Activated T-helper 2 cell treated with anti-CD3 and anti-CD28 coated beads, Interferon-gamma antibody, Interleukin-2, Interleukin-4, amounts not matched to agents 10 μg/mL and 5 μg/mL and 100 μg/mL, durations not matched to agents 14 hours and 24 hours and 36 hours (primary cell): ENCODE measurements at regions of chr20 and their contacts with region 1.

Region 1: DNA sequence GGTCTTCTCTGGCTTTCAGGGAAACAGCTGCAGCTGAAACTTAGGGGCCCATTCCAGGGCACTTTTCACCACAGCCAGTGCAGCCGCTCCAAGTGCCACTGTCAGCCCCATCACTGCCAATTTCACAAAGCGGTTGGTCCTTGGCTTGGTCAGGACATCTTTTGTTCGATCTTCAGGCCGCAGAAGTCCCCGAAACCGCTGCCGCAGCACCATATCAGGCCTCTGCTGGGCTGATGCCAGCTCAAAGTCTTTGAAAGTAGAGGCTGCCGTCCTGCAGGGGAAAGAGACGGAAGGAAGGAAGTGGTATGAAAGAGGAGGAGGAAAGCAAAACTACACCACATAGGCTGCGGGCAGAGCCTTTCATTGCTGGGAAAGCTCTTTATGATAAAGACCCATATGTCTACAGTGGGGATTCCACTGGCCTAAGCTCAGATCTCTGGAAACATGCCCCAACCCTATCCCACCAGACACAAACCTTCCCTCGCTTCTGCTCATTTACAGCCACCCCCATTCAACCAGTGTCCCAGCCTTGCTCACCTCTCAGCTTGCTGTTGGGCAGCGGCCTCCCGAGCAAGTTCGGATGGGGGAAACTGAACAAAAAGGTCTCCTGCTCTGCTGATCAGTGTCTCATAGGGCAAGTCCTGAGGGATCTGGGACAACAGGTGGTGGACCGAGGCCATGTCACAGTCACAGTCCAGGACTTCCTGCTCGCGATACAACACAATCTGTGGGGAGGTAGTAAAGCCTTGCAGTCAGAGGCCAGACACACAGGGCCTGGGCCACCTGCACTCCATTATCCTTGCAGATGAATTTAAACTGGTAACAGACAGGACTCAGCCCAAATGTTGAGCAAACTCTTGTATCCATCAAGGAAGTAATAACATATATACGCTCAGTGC is 23.5 kb downstream of the TBC1D20 start:
- DNase-seq: peak; percentile 55
- H3K4me3 Mint-ChIP-seq: peak overlapping the region; percentile 71
- H3K27ac Mint-ChIP-seq: peak overlapping the region; percentile 64
- H3K4me1 Mint-ChIP-seq: peaks cover 54% of the 10 kb centered on the region
- H3K27me3 Mint-ChIP-seq: no peaks in the 10 kb centered on the region

Region 2: DNA sequence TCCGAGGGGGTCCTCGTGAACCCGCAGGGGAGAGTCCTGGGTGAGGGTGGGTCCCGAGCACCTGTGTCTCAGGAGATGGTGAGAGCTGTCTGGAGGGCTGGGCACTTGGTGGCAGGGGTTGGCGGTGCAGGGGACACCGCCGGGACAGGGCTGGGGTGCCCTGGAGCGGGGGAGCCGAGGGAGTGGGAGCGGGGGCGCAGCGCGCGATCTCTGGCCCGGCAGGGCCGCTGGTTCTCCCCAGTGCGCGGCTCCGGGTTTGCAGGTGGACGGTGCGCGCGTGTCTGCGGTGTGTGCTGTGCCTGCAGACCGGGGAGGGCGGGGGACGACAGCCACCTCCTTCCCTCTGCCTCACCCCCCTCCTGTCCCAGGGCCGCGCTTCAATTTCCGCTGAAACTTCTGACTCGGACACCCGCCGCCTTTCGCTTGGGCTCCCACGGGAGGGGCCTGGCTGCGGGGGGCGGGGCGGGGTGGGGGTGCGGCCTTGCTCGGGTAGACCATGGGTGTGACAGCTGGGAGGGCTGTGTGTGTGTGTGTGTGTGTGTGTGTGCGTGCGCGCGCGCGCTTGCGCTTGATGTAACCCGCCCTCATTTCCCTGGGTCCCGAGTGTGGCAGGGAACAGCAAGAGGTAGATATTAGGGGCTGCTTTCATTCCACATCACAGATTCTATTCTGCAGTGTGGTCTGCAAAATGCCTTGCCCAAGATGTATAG is 57.1 kb before region 1 on chr20:
- intact Hi-C with region 1: loop called (anchors 2 kb)
- DNase-seq: peak; percentile 79
- H3K4me3 Mint-ChIP-seq: peak overlapping the region; percentile 78
- H3K27ac Mint-ChIP-seq: peak overlapping the region; percentile 78
- H3K4me1 Mint-ChIP-seq: peaks cover 23% of the 10 kb centered on the region
- H3K27me3 Mint-ChIP-seq: no peaks in the 10 kb centered on the region

Region 3: GRCh38 chr20:462199-462991 is 23.6 kb after region 1 on chr20 and contains the start of gene TBC1D20:
- intact Hi-C with region 1: loop called (anchors 1 kb)
- DNase-seq: peak; percentile 80
- H3K4me3 Mint-ChIP-seq: peak within 1 kb of the TSS; percentile 96
- H3K27ac Mint-ChIP-seq: peak within 1 kb of the TSS; percentile 89
- H3K4me1 Mint-ChIP-seq: peaks cover 42% of the 10 kb centered on the region
- H3K27me3 Mint-ChIP-seq: peaks cover 5% of the 10 kb centered on the region
- total RNA-seq, gene TBC1D20: 30.1 and 31.5 TPM in 2 replicates

Region 4: GRCh38 chr20:504632-505075 is 65.8 kb after region 1 on chr20:
- intact Hi-C with region 1: no loop called
- DNase-seq: no peak
- H3K4me3 Mint-ChIP-seq: no peak overlapping the region
- H3K27ac Mint-ChIP-seq: no peak overlapping the region
- H3K4me1 Mint-ChIP-seq: peaks cover 15% of the 10 kb centered on the region
- H3K27me3 Mint-ChIP-seq: no peaks in the 10 kb centered on the region

Region 5: DNA sequence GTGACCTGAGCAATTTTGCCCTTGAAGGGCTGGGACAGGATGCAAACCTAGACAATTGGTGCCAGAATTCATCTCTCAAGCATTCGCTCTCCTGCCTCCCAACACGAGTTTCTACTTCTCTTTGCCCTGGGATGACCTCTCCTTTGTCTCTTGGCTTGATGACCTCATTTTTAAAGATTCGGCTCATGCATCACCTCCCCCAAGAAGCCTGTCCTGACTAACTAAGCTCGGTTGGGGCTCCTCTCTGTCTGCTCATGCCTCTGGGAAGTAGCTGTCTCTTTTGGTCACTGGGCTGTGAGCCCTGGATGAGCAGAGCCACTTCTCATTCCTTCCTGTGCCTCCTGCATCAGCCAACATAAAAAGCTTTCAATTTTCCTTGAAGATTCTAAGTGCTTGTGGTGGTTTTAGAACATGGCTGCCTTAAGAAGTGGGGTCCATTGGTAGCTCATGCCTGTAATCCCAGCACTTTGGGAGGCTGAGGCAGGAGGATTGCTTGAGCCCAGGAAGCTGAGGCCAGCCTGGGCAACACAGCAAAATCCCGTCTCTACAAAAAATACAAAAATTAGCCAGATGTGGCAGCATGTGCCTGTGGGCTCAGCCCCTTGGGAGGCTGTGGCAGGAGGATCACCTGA is 182.4 kb after region 1 on chr20:
- intact Hi-C with region 1: no loop called
- DNase-seq: no peak
- H3K4me3 Mint-ChIP-seq: no peak overlapping the region
- H3K27ac Mint-ChIP-seq: no peak overlapping the region
- H3K4me1 Mint-ChIP-seq: no peaks in the 10 kb centered on the region
- H3K27me3 Mint-ChIP-seq: peaks cover 35% of the 10 kb centered on the region

Region 6: DNA sequence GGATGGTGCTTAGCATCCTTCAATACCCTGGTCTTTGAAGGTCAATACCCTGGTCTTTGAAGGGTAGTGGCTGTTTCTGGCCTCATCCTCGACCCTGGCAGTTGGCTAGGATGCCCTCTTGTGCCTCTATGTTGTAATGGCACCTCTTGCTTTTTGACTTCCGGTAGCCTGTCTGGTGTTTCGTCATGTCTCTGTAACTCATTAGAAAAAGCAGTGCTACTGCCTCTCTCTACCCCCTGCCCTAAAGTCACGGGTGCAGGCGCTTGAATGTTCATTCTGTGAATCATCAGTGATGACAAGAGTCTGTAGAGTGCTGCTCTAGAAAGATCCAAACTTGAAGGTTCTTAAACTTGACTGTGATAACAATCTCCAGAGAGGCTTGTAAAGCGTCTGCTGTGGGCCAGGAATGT is 535.0 kb after region 1 on chr20:
- intact Hi-C with region 1: no loop called
- DNase-seq: peak; percentile 19
- H3K4me3 Mint-ChIP-seq: no peak overlapping the region
- H3K27ac Mint-ChIP-seq: no peak overlapping the region
- H3K4me1 Mint-ChIP-seq: peaks cover 3% of the 10 kb centered on the region
- H3K27me3 Mint-ChIP-seq: peaks cover 1% of the 10 kb centered on the region